Endothelial cell of umbilical vein (primary cell): ENCODE measurements at regions of chr13 and their contacts with region 1.

Region 1: GRCh38 chr13:97432917-97433726 is 847 bp upstream of the RAP2A start:
- DNase-seq: peak; percentile 100
- H3K4me3 ChIP-seq: peak overlapping the region; percentile 70 to 87 (median 76)
- H3K27ac ChIP-seq: peak overlapping the region; percentile 95
- H3K4me1 ChIP-seq: peaks cover 17% of the 10 kb centered on the region
- H3K27me3 ChIP-seq: no peaks in the 10 kb centered on the region
- CTCF ChIP-seq: no peak
- POLR2A ChIP-seq: peak; percentile 90

Region 2: GRCh38 chr13:96053011-96053703 is 1380.0 kb before region 1 on chr13 and contains the start of gene UGGT2:
- CTCF ChIA-PET with region 1: no interaction called
- POLR2A ChIA-PET with region 1: no interaction called
- dilution Hi-C with region 1: no loop called
- intact Hi-C with region 1: loop called (anchors 10 kb)
- DNase-seq: peak; percentile 94
- H3K4me3 ChIP-seq: peak within 1 kb of the TSS; percentile 92 to 96 (median 94)
- H3K27ac ChIP-seq: peak within 1 kb of the TSS; percentile 95
- H3K4me1 ChIP-seq: peaks cover 3% of the 10 kb centered on the region
- H3K27me3 ChIP-seq: peaks cover 0 to 6% of the 10 kb centered on the region in 2 experiments
- CTCF ChIP-seq: no peak
- POLR2A ChIP-seq: peak; percentile 80
- total RNA-seq, gene UGGT2: 25.1 and 25.7 TPM in 2 replicates

Region 3: GRCh38 chr13:96200810-96201209 is 1232.3 kb before region 1 on chr13:
- CTCF ChIA-PET with region 1: no interaction called
- POLR2A ChIA-PET with region 1: no interaction called
- dilution Hi-C with region 1: no loop called
- intact Hi-C with region 1: no loop called
- DNase-seq: no peak
- H3K4me3 ChIP-seq: no peak overlapping the region
- H3K27ac ChIP-seq: no peak overlapping the region
- H3K4me1 ChIP-seq: no peaks in the 10 kb centered on the region
- H3K27me3 ChIP-seq: no peaks in the 10 kb centered on the region
- CTCF ChIP-seq: no peak
- POLR2A ChIP-seq: no peak

Region 4: DNA sequence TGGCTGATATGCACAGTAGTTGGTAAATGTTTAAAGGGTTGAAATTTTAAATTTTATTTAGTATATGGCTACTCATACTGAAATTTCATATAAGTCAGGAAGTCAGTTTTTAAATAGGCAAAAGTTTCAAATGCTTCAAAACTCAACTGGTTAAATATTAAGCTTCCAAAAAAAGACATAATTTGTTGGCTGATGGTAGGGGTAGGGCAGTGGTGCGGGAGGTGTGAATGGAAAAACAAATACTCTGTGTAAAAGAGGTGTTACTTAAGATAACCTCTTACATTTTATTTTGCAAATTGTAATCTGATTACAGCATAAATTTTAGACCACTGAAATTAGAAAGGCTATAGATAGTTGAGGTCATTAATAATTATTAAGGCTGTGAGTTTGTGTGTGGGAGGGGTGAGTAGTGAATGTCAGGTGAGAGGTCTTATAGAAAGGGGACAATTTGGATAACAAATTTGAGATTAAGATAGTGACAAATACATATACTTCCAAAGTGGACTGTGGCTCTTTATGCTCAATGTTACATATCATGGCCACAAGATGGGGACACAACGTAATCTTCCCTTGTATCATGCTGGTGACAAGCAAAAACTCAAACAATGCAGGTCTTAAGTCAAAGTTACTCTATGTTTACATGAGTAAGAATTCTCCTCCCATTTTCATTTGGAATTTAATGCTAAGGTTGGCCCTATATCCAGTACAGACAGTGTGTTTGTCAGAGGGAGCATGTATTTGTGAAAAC is 402.2 kb before region 1 on chr13:
- CTCF ChIA-PET with region 1: no interaction called
- POLR2A ChIA-PET with region 1: no interaction called
- dilution Hi-C with region 1: no loop called
- intact Hi-C with region 1: loop called (anchors 2 kb)
- DNase-seq: peak; percentile 76
- H3K4me3 ChIP-seq: no peak overlapping the region
- H3K27ac ChIP-seq: no peak overlapping the region
- H3K4me1 ChIP-seq: peaks cover 19% of the 10 kb centered on the region
- H3K27me3 ChIP-seq: no peaks in the 10 kb centered on the region
- CTCF ChIP-seq: peak; percentile 29 to 33
- POLR2A ChIP-seq: no peak

Region 5: GRCh38 chr13:97372936-97373335 is 60.2 kb before region 1 on chr13:
- CTCF ChIA-PET with region 1: no interaction called
- POLR2A ChIA-PET with region 1: no interaction called
- dilution Hi-C with region 1: no loop called
- intact Hi-C with region 1: no loop called
- DNase-seq: no peak
- H3K4me3 ChIP-seq: no peak overlapping the region
- H3K27ac ChIP-seq: no peak overlapping the region
- H3K4me1 ChIP-seq: peaks cover 6% of the 10 kb centered on the region
- H3K27me3 ChIP-seq: no peaks in the 10 kb centered on the region
- CTCF ChIP-seq: no peak
- POLR2A ChIP-seq: no peak

Region 6: GRCh38 chr13:97567510-97568243 is 134.6 kb after region 1 on chr13:
- CTCF ChIA-PET with region 1: interaction called, 3 read pairs
- POLR2A ChIA-PET with region 1: no interaction called
- dilution Hi-C with region 1: no loop called
- intact Hi-C with region 1: loop called (anchors 1 kb)
- DNase-seq: no peak
- H3K4me3 ChIP-seq: no peak overlapping the region
- H3K27ac ChIP-seq: no peak overlapping the region
- H3K4me1 ChIP-seq: peaks cover 9% of the 10 kb centered on the region
- H3K27me3 ChIP-seq: peaks cover 2 to 8% of the 10 kb centered on the region in 2 experiments
- CTCF ChIP-seq: no peak
- POLR2A ChIP-seq: no peak

Region 7: GRCh38 chr13:97659602-97660001 is 226.5 kb after region 1 on chr13:
- CTCF ChIA-PET with region 1: interaction called, 8 read pairs
- POLR2A ChIA-PET with region 1: no interaction called
- dilution Hi-C with region 1: no loop called
- intact Hi-C with region 1: loop called (anchors 1 kb)
- DNase-seq: peak; percentile 45
- H3K4me3 ChIP-seq: no peak overlapping the region
- H3K27ac ChIP-seq: no peak overlapping the region
- H3K4me1 ChIP-seq: peaks cover 54% of the 10 kb centered on the region
- H3K27me3 ChIP-seq: no peaks in the 10 kb centered on the region
- CTCF ChIP-seq: peak; percentile 30 to 41
- POLR2A ChIP-seq: no peak

Region 8: DNA sequence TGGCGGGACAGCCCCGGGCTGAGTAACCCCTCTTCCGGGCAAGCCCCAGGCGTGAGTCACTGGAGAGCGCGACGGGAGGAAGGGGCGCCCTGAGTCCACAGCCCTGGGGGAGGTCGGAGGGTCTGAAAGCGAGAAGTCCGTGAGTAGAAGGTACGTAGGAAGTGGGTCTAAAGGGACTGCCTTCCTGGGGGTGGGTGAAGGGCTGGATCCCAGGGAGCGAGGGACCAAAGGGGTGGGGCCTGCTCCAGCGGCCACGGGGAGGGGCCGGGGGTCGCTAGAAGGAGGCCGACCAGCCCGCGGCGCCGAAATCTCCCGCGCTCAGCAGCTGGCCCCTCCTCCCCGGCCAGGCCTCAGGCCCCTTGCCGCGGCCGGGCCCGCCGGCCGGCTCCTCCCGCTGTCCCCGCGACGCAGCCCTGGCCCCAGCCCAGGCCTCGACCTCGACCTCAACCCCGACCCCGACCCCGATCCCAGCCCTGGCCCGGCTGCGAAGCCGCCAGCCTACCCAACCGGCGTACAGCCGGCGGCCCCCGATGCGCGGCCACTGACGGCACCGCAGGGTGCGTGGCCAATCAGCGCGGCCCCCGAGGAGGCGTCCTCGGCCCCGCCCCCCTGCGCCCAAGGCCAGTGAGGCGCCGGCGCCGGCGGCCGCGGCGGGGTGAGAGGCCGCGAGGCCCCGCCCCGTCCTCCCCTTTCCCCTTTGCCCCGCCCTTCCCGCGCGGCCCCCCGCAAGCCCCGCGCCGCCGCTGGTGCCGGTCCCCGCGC is 542.9 kb after region 1 on chr13:
- CTCF ChIA-PET with region 1: no interaction called
- POLR2A ChIA-PET with region 1: no interaction called
- dilution Hi-C with region 1: no loop called
- intact Hi-C with region 1: loop called (anchors 2 kb)
- DNase-seq: peak; percentile 85
- H3K4me3 ChIP-seq: peak overlapping the region; percentile 53 to 91 (median 66)
- H3K27ac ChIP-seq: peak overlapping the region; percentile 74
- H3K4me1 ChIP-seq: peaks cover 26% of the 10 kb centered on the region
- H3K27me3 ChIP-seq: no peaks in the 10 kb centered on the region
- CTCF ChIP-seq: no peak
- POLR2A ChIP-seq: peak; percentile 90